B cell (primary cell): ENCODE measurements at regions of chr11 and their contacts with region 1.

Region 1: DNA sequence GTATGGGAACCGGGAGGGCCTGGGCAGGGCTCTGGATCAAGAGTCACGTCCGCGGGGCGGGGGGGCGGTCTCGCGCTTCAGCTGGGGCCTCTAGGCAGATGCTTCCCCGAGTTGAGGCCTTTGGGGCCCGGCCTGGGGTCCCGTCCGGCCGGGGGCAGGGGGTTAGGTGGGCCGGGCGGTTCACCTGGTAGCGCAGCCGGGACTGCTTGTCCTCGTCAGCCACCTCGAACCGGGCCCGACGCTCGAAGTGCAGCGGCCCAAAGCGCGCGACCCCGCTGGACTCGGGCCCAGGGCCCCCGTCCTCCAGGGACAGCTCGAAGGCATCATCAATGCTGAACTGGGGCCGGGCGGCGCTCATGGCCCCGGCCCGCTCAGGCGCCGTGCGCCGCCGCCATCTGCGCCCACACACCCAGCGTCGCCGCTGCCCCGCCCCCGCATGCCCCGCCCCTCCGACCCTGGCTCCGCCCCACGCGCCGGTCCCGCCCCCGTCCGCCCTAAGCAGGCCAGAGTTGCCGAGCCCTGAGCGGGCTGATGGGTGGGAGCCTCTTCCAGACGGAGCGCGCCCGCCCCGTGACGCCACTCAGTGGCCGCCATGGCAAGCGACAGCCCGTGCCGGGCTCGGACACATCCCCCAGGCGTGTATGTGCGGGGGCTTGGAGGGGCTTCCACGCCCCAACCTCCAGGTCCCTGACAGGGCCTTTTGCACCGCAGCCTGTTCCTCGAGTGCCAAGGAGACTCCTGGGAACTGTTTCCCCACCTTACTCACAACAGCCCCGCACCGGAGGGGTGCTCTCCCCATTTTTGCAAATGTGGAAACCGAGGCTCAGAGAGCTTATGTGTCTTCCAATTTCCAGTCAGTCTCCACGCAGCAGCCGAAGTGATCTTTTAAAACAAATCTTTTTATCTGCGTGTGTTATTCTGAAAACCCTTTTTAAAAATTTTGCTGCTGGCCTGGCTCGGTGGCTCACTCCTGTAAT is at the start of gene TMEM134:
- DNase-seq: peak; percentile 92
- ATAC-seq: peak; percentile 75
- H3K4me3 ChIP-seq: peak within 1 kb of the TSS; percentile 61 to 96 (median 91)
- H3K4me3 Mint-ChIP-seq: peak within 1 kb of the TSS; percentile 95
- H3K27ac ChIP-seq: peak within 1 kb of the TSS; percentile 78 to 87
- H3K27ac Mint-ChIP-seq: peak within 1 kb of the TSS; percentile 95
- H3K4me1 ChIP-seq: peaks cover 31 to 55% of the 10 kb centered on the region in 2 donors
- H3K4me1 Mint-ChIP-seq: peaks cover 49% of the 10 kb centered on the region
- H3K27me3 ChIP-seq: no peaks in the 10 kb centered on the region
- H3K27me3 Mint-ChIP-seq: no peaks in the 10 kb centered on the region
- CTCF ChIP-seq: peak; percentile 63
- total RNA-seq, gene TMEM134: 154 and 167 TPM in 2 replicates

Region 2: DNA sequence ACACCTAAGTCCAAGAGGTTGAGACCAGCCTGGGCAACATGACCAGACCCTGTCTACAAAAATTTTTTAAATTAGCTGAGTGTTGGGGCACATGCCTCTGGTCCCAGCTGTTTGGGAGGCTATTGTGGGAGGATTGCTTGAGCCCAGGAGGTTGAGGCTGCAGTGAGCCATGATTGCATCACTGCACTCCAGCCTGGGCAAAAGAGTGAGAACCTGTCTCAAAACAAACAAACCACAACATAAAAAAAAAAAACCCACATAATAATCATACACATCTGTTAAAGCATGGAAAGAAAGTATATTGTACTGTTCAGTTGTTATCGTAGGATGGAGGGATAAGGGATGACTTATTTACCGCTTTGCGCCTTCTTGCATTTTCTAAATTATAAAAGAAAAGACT is 238.7 kb before region 1 on chr11:
- CTCF ChIA-PET with region 1: no interaction called
- POLR2A ChIA-PET with region 1: no interaction called
- intact Hi-C with region 1: no loop called
- DNase-seq: no peak
- ATAC-seq: no peak
- H3K4me3 ChIP-seq: no peak overlapping the region
- H3K4me3 Mint-ChIP-seq: no peak overlapping the region
- H3K27ac ChIP-seq: no peak overlapping the region
- H3K27ac Mint-ChIP-seq: no peak overlapping the region
- H3K4me1 ChIP-seq: peaks cover 0 to 3% of the 10 kb centered on the region in 2 donors
- H3K4me1 Mint-ChIP-seq: peaks cover 10% of the 10 kb centered on the region
- H3K27me3 ChIP-seq: no peaks in the 10 kb centered on the region
- H3K27me3 Mint-ChIP-seq: no peaks in the 10 kb centered on the region
- CTCF ChIP-seq: no peak

Region 3: DNA sequence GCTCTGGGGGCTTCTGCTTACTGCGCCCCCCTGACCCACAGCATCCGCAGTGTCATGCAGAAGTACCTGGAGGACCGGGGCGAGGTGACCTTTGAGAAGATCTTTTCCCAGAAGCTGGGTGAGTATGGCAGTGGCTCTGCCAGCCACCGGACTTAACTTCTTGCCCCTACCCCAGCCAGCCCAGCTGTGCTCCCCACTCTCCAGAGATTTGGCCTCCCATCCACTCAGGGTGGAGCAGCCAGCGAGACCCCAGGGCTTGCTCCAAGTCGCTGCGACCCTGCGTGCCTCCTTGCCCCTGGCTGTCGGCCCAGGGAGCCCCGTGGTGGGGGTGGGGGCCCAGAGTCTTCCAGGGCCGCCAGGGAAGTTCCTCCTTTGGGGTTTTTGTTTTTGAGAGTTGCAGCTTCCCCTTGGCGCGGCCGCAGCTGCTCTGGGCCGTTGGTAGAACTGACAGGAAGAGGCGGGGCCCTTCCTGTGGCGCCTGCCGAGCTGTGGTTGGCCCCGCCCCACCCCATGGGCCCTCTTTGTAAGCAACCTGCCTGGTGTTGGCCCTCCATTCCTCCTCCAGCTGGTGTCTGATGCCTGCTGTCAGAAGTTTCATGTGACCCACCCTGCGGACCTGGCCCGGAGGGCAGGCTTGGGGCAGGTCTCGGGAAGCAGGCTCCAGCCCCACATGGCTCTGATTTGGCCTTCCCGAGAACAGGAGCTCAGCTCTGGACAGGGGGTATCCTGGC is 191.7 kb before region 1 on chr11:
- CTCF ChIA-PET with region 1: no interaction called
- POLR2A ChIA-PET with region 1: interaction called, 15 read pairs
- intact Hi-C with region 1: no loop called
- DNase-seq: peak; percentile 96
- ATAC-seq: peak; percentile 95
- H3K4me3 ChIP-seq: peak overlapping the region; percentile 35 to 59 (median 50)
- H3K4me3 Mint-ChIP-seq: peak overlapping the region; percentile 84
- H3K27ac ChIP-seq: peak overlapping the region; percentile 82
- H3K27ac Mint-ChIP-seq: peak overlapping the region; percentile 95
- H3K4me1 ChIP-seq: peaks cover 82 to 86% of the 10 kb centered on the region in 2 donors
- H3K4me1 Mint-ChIP-seq: peaks cover 76% of the 10 kb centered on the region
- H3K27me3 ChIP-seq: no peaks in the 10 kb centered on the region
- H3K27me3 Mint-ChIP-seq: no peaks in the 10 kb centered on the region
- CTCF ChIP-seq: no peak

Region 4: GRCh38 chr11:67317205-67317887 is 151.8 kb before region 1 on chr11:
- CTCF ChIA-PET with region 1: no interaction called
- POLR2A ChIA-PET with region 1: no interaction called
- intact Hi-C with region 1: no loop called
- DNase-seq: peak; percentile 99
- ATAC-seq: peak; percentile 83
- H3K4me3 ChIP-seq: peak overlapping the region; percentile 77 to 92 (median 87)
- H3K4me3 Mint-ChIP-seq: peak overlapping the region; percentile 89
- H3K27ac ChIP-seq: peak overlapping the region; percentile 46 to 78
- H3K27ac Mint-ChIP-seq: peak overlapping the region; percentile 97
- H3K4me1 ChIP-seq: peaks cover 22 to 33% of the 10 kb centered on the region in 2 donors
- H3K4me1 Mint-ChIP-seq: peaks cover 21% of the 10 kb centered on the region
- H3K27me3 ChIP-seq: no peaks in the 10 kb centered on the region
- H3K27me3 Mint-ChIP-seq: no peaks in the 10 kb centered on the region
- CTCF ChIP-seq: peak; percentile 81

Region 5: DNA sequence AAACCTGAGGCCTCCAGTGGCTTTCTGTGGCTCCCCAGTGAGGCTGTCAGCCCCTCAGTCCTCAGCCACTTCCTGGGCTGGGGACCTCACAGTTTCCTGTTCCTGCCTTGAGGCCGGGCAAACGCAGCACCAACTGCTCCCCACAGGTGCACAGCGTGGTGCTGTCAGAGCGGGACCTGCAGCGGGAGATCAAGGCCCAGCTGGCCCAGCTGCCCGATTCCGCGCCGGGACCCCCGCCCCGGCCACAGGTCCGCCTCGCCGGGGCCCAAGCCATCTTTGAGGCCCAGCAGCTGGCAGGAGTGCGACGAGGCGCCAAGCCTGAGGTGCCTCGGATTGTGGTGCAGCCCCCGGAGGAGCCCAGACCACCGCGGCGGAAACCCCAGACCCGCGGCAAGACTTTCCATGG is 59.9 kb before region 1 on chr11:
- CTCF ChIA-PET with region 1: interaction called, 64 read pairs
- POLR2A ChIA-PET with region 1: interaction called, 115 read pairs
- intact Hi-C with region 1: no loop called
- DNase-seq: peak; percentile 82
- ATAC-seq: peak; percentile 55
- H3K4me3 ChIP-seq: peak overlapping the region in 4 of 5 experiments; percentile 40 to 80 (median 56)
- H3K4me3 Mint-ChIP-seq: peak overlapping the region; percentile 91
- H3K27ac ChIP-seq: peak overlapping the region; percentile 83 to 88
- H3K27ac Mint-ChIP-seq: peak overlapping the region; percentile 100
- H3K4me1 ChIP-seq: peaks cover 92 to 99% of the 10 kb centered on the region in 2 donors
- H3K4me1 Mint-ChIP-seq: peaks cover 91% of the 10 kb centered on the region
- H3K27me3 ChIP-seq: no peaks in the 10 kb centered on the region
- H3K27me3 Mint-ChIP-seq: no peaks in the 10 kb centered on the region
- CTCF ChIP-seq: no peak

Region 6: DNA sequence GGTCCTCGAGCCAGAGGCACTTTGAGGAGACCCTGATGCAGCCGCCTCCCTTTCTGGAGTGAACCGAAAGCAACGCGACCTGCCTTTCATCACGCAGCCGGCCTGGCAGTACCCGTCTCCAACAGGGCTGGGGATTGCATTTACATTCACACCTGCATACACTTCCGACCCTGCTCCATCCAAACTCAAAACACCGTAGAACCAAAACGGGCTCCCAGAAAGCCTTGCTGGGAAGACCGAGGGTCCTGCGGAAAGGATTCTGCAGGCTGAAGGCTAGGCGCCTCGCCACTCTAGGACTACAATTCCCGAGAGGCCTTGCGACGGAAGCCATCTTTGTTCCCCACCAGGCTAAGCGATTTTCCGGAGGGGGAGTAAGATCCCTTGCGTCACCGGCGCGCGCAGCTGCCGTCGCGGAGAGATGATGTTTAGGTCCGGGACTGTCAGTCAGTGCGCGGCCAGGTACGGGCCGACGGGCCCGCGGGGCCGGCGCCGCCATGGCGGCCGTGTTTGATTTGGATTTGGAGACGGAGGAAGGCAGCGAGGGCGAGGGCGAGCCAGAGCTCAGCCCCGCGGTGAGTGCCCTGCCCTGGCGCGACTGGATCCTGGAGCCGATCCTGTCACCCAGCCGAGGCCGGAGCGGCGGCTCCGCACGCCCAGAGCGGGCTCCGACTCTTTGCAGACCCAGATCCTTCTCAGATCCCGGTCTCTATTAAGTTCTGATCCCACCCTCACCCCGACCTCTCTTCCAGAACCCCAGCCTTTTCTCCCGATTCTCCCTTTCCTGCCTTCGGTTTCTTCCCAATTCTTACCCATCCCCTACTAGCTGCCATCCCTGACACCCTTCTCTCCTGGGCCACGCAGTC is 40.8 kb before region 1 on chr11 and contains the start of gene RPS6KB2:
- CTCF ChIA-PET with region 1: interaction called, 3 read pairs
- POLR2A ChIA-PET with region 1: interaction called, 215 read pairs
- intact Hi-C with region 1: loop called (anchors 1 kb)
- DNase-seq: peak; percentile 98
- ATAC-seq: peak; percentile 86
- H3K4me3 ChIP-seq: peak within 1 kb of the TSS; percentile 82 to 95 (median 91)
- H3K4me3 Mint-ChIP-seq: peak within 1 kb of the TSS; percentile 99
- H3K27ac ChIP-seq: peak within 1 kb of the TSS; percentile 70 to 92
- H3K27ac Mint-ChIP-seq: peak within 1 kb of the TSS; percentile 96
- H3K4me1 ChIP-seq: peaks cover 13 to 46% of the 10 kb centered on the region in 2 donors
- H3K4me1 Mint-ChIP-seq: peaks cover 41% of the 10 kb centered on the region
- H3K27me3 ChIP-seq: no peaks in the 10 kb centered on the region
- H3K27me3 Mint-ChIP-seq: no peaks in the 10 kb centered on the region
- CTCF ChIP-seq: no peak
- total RNA-seq, gene RPS6KB2: 81.8 and 82.0 TPM in 2 replicates

Region 7: DNA sequence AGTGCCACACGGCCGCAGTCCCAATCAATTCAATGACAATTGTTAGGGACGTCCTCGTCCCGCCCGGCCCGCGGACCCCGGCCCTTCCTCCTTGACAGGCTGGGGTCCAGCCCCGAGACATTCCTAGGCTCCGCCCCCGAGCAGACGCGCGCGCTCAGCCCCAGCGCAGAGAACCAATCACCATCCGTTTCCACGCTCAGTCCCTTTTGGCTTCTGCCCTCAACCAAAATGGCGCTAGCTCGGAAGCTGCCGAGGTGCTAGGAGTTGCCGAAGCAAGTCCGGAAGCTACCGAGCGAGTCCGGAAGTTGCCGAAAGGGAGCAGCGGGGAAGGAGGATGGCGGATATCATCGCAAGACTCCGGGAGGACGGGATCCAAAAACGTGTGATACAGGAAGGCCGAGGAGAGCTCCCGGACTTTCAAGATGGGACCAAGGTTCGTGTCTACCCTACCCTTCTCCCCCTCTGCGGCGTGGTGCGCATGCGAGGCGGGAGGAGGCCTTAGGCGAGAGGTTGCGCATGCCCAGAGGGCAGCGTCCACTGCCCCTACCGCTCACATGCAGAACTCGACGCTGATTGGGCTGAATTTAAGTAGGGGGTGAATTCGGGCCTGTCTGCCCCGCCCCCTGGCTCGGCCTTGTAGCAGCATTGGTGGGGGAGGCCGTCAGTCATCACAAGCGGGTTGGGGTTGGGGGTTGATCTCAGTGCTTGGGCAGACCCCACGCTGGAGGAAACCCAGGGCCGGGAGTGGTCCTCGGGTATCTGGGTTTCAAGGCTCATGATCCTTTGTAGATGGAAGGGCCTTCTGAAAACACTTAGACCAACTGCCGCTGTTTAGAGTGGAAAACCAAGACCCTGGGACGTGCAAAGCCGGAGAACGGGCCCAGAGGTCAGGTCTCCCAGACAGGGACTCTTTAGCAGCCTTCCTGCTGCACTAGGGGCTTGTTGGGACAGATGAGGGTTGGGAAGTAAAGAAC is 14.0 kb after region 1 on chr11 and contains the start of gene AIP:
- CTCF ChIA-PET with region 1: interaction called, 6 read pairs
- POLR2A ChIA-PET with region 1: interaction called, 23 read pairs
- intact Hi-C with region 1: loop called (anchors 1 kb)
- DNase-seq: peak; percentile 98
- ATAC-seq: peak; percentile 87
- H3K4me3 ChIP-seq: peak within 1 kb of the TSS; percentile 56 to 99 (median 68)
- H3K4me3 Mint-ChIP-seq: peak within 1 kb of the TSS; percentile 99
- H3K27ac ChIP-seq: peak within 1 kb of the TSS; percentile 75 to 79
- H3K27ac Mint-ChIP-seq: peak within 1 kb of the TSS; percentile 100
- H3K4me1 ChIP-seq: peaks cover 38 to 56% of the 10 kb centered on the region in 2 donors
- H3K4me1 Mint-ChIP-seq: peaks cover 56% of the 10 kb centered on the region
- H3K27me3 ChIP-seq: no peaks in the 10 kb centered on the region
- H3K27me3 Mint-ChIP-seq: no peaks in the 10 kb centered on the region
- CTCF ChIP-seq: no peak
- total RNA-seq, gene AIP: 120 and 127 TPM in 2 replicates